Activated CD8-positive, alpha-beta T cell treated with anti-CD3 and anti-CD28 coated beads, Interleukin-2, amount 10 ng/mL, durations not matched to agents 7 days and 5 days (primary cell): ENCODE measurements at regions of chr20 and their contacts with region 1.

Region 1: GRCh38 chr20:21571841-21572690 is 58.2 kb upstream of the NKX2-2 start:
- DNase-seq: peak; percentile 27
- ATAC-seq: no peak
- H3K4me3 Mint-ChIP-seq: no peak overlapping the region
- H3K27ac Mint-ChIP-seq: no peak overlapping the region
- H3K4me1 Mint-ChIP-seq: peaks cover 6% of the 10 kb centered on the region
- H3K27me3 Mint-ChIP-seq: peaks cover 14% of the 10 kb centered on the region

Region 2: DNA sequence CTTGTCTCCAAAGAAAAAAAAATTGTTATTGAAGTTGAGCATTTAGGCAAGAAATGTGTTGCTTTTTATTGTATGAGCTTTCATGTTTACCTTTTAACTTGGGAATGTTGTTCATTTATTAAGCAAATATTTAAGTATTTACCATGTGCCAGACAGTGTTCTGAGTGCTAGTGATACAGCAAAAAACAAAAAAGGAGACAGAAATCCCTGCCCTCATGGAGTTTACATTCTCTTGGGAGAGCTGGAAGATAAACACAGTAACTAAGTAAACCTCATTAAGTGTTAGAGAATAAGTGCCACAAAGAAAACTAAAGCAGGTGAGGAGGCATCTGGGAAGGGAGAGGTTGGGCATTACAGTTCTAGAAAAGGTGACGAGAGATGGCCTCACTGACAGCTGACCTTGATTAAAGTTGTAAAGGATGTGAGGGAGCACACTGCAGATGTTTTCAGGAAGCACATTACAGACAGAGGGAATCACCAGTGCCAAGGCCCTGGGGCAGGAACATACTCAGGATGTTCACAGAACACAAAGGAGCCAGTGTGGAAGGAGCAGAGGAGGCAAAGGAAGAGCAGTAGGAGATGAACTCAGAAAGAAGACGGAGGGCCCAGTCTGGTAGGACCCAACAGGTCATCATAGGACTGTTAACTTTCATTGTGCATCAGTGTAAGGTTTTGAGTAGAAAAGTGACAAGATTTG is 235.5 kb before region 1 on chr20:
- CTCF ChIA-PET with region 1: no interaction called
- POLR2A ChIA-PET with region 1: no interaction called
- DNase-seq: no peak
- ATAC-seq: no peak
- H3K4me3 Mint-ChIP-seq: no peak overlapping the region
- H3K27ac Mint-ChIP-seq: no peak overlapping the region
- H3K4me1 Mint-ChIP-seq: no peaks in the 10 kb centered on the region
- H3K27me3 Mint-ChIP-seq: no peaks in the 10 kb centered on the region

Region 3: DNA sequence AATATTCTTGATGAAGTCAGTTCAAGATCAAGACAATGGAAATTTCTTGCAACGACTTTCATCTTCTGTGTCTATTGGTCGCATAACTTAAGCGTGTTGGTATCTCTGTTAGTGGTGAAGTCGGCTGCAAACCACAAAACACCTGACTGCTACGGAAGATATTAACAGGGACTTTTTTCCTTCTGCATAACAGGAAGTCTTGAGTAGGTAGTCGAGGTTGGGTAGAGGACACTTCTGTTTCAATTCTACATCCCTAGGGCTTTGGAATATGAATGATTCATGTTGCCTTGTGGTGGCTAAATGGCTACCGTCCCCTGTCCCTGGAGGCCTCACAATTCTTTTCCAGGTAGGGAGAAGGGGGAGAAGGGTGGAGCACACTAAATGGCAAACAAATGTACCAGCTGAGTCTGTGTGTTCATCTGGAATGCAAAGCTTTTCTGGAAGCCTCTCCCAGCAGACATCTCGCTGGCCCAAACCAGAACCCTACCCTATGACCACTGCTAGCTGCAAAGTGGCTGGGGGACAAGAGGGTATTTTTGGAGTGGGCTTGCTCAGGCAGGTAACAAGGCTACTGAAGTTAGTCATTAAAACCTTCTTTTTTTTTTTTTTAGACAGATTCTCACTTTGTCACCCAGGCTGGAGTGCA is 23.6 kb before region 1 on chr20:
- CTCF ChIA-PET with region 1: interaction called, 21 read pairs
- POLR2A ChIA-PET with region 1: no interaction called
- DNase-seq: peak; percentile 53
- ATAC-seq: peak; percentile 80
- H3K4me3 Mint-ChIP-seq: no peak overlapping the region
- H3K27ac Mint-ChIP-seq: peak overlapping the region; percentile 47
- H3K4me1 Mint-ChIP-seq: peaks cover 13% of the 10 kb centered on the region
- H3K27me3 Mint-ChIP-seq: no peaks in the 10 kb centered on the region

Region 4: DNA sequence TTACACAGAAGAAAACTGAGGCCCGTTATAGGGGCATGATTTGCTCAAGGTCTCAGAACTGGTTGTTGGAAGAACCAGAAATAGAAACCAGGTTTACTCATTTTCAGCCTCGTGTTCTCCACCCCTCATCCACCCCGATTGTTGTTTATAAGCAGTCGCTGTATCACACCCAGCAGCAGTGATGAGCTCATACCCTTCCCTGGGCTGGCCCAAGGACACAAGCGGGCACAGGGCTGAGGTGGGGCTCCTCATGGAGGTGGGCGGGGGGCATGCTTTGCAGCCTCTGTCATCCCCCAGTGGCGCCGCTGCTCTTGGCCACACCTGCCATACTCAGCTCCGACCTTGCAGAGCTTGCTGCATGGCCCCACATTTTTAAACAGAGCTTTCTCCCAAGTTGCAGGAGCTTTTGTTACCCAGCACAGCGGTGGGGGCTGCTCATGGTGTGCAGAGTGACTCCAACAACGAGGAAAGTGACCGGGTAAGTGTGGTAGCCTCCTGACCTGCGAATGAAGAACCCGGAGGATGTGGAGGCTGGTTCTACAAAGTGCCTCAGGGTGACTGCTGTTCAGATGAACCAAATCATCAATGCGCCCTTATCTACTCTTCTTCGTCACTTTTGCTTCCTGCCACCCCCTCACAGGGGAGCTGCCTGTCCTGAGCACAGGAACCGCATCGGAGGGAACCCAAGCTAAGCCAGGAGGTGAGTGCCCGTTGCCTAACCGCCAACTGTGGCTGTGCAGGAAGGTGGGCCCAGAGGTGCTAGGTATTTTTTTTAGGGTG is 14.6 kb before region 1 on chr20:
- CTCF ChIA-PET with region 1: interaction called, 21 read pairs
- POLR2A ChIA-PET with region 1: no interaction called
- DNase-seq: no peak
- ATAC-seq: no peak
- H3K4me3 Mint-ChIP-seq: no peak overlapping the region
- H3K27ac Mint-ChIP-seq: no peak overlapping the region
- H3K4me1 Mint-ChIP-seq: no peaks in the 10 kb centered on the region
- H3K27me3 Mint-ChIP-seq: no peaks in the 10 kb centered on the region